ENCODE measurements at regions of chr6 and their contacts with region 1.

Region 1: GRCh38 chr6:166989427-166990032 is 9.7 kb upstream of the CEP43 start:
- DNase-seq: peak; percentile 47 to 74 (median 56)
- H3K4me3 ChIP-seq: no peak overlapping the region
- H3K4me3 Mint-ChIP-seq: peak overlapping the region in 1 of 8 donors; percentile 12
- H3K27ac ChIP-seq: no peak overlapping the region
- H3K27ac Mint-ChIP-seq: peak overlapping the region in 2 of 7 donors; percentile 67 to 78
- H3K4me1 ChIP-seq: peaks cover 11% of the 10 kb centered on the region
- H3K4me1 Mint-ChIP-seq: peaks cover 20 to 33% (median 24%) of the 10 kb centered on the region in 4 donors
- H3K27me3 ChIP-seq: no peaks in the 10 kb centered on the region
- H3K27me3 Mint-ChIP-seq: no peaks in the 10 kb centered on the region

Region 2: GRCh38 chr6:166775180-166776081 is 214.1 kb before region 1 on chr6:
- CTCF ChIA-PET with region 1: interaction called, 103 read pairs
- POLR2A ChIA-PET with region 1: interaction called, 10 read pairs
- intact Hi-C with region 1: no loop called
- DNase-seq: peak; percentile 68 to 76 (median 73)
- H3K4me3 ChIP-seq: no peak overlapping the region
- H3K4me3 Mint-ChIP-seq: no peak overlapping the region
- H3K27ac ChIP-seq: no peak overlapping the region
- H3K27ac Mint-ChIP-seq: no peak overlapping the region
- H3K4me1 ChIP-seq: peaks cover 5% of the 10 kb centered on the region
- H3K4me1 Mint-ChIP-seq: peaks cover 0 to 5% (median 3%) of the 10 kb centered on the region in 4 donors
- H3K27me3 ChIP-seq: no peaks in the 10 kb centered on the region
- H3K27me3 Mint-ChIP-seq: peaks cover 2 to 6% of the 10 kb centered on the region in 2 donors

Region 3: DNA sequence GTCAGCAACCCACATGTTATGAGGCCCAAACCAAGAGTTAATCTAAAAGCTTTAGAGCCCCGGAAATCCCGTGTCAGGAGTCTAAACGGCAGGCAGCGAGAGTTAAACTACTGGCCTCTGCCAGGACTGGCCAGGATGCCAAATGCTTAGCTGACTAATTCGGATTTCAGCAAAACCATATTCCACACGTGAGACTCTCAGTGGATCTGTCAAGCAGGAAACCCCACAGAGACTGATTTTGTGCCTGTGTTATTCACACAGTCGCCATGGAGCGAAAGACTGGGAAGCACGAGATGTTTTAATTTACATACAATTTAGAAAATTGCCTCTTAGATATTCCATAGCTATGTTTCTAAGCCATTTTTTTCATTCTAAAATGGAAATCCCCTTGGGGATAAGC is 186.1 kb before region 1 on chr6:
- CTCF ChIA-PET with region 1: interaction called, 10 read pairs
- POLR2A ChIA-PET with region 1: no interaction called
- intact Hi-C with region 1: no loop called
- DNase-seq: no peak
- H3K4me3 ChIP-seq: no peak overlapping the region
- H3K4me3 Mint-ChIP-seq: no peak overlapping the region
- H3K27ac ChIP-seq: no peak overlapping the region
- H3K27ac Mint-ChIP-seq: no peak overlapping the region
- H3K4me1 ChIP-seq: no peaks in the 10 kb centered on the region
- H3K4me1 Mint-ChIP-seq: peaks cover 0 to 5% (median 0%) of the 10 kb centered on the region in 4 donors
- H3K27me3 ChIP-seq: no peaks in the 10 kb centered on the region
- H3K27me3 Mint-ChIP-seq: no peaks in the 10 kb centered on the region

Region 4: DNA sequence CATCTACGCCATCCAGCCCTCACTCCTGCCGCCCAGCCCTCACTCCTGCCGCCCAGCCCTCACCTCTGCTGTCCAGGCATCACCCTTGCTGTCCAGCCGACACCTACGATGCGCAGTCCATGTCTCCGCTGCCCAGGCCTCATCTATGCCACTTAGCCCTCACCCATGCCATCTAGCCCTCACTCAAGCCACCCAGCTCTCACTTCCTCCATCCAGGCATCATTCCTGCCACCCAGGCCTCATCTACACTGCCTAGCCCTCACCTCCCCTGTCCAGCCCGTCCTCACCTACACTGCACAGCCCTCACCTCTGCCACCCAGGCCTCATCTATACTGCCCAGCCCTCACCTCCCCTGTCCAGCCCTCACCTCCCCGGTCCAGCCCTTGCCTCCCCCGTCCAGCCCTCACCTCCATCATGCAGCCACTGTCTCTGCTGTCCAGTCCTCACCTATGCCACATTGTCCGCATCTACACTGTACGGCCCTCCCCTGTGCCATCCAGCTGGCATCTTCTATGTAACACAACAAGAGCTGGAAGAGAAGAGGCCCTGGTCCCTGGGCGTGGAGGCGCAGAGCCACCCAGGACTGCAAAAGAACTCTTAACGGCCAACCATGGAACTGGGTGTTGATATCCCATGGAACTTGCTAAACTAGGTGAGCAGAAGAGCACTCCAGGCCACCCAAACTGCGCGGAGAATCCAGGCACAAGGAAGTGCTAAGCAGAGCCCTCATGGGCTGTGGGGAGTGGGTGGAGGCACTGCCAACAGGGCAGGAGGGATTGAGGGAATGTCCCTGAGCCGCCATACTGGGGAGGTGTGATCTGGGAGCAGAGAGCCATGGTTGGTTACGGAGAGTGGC is 64.2 kb before region 1 on chr6:
- CTCF ChIA-PET with region 1: interaction called, 18 read pairs
- POLR2A ChIA-PET with region 1: no interaction called
- intact Hi-C with region 1: no loop called
- DNase-seq: no peak
- H3K4me3 ChIP-seq: no peak overlapping the region
- H3K4me3 Mint-ChIP-seq: no peak overlapping the region
- H3K27ac ChIP-seq: no peak overlapping the region
- H3K27ac Mint-ChIP-seq: peak overlapping the region; percentile 27 to 87 (median 67)
- H3K4me1 ChIP-seq: peaks cover 3% of the 10 kb centered on the region
- H3K4me1 Mint-ChIP-seq: peaks cover 3 to 8% (median 7%) of the 10 kb centered on the region in 4 donors
- H3K27me3 ChIP-seq: no peaks in the 10 kb centered on the region
- H3K27me3 Mint-ChIP-seq: no peaks in the 10 kb centered on the region

Region 5: GRCh38 chr6:166950443-166950821 is 39.1 kb before region 1 on chr6:
- CTCF ChIA-PET with region 1: interaction called, 244 read pairs
- POLR2A ChIA-PET with region 1: interaction called, 66 read pairs
- intact Hi-C with region 1: loop called (anchors 1 kb)
- DNase-seq: peak in 4 of 5 donors; percentile 38 to 56 (median 41)
- H3K4me3 ChIP-seq: peak overlapping the region; percentile 26 to 39
- H3K4me3 Mint-ChIP-seq: peak overlapping the region; percentile 83 to 94 (median 88)
- H3K27ac ChIP-seq: peak overlapping the region; percentile 92
- H3K27ac Mint-ChIP-seq: peak overlapping the region; percentile 94 to 100 (median 99)
- H3K4me1 ChIP-seq: peaks cover 79% of the 10 kb centered on the region
- H3K4me1 Mint-ChIP-seq: peaks cover 53 to 75% (median 60%) of the 10 kb centered on the region in 4 donors
- H3K27me3 ChIP-seq: no peaks in the 10 kb centered on the region
- H3K27me3 Mint-ChIP-seq: no peaks in the 10 kb centered on the region

Region 6: DNA sequence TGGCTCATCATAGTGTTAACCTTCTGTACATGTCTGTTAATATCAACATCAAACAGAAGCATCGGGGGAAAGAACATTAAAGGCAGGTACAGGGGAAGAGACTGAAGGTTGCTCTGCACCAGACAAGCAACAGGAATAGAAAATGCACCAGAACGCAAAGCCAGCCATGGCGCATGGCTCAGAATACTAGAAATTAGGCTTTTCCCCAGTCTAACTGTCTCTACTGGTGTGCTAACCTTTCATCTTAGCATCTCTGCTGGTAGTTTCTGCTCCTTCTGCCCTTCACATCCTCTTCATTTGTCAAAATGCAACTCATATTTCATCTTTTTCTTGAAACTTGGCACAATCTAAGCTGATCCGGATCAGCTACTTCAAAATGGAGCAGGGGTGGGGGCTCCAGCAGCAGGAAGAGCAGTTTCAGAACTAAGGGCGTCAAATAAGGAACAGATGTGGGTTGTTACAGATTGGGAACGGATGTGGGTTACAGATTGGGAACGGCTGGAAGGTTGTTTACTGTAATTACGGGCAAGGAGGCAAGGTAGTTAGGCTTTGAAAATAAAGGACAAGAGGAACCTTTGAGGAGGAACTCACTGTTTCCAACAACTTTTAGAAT is 20.0 kb before region 1 on chr6:
- CTCF ChIA-PET with region 1: interaction called, 113 read pairs
- POLR2A ChIA-PET with region 1: interaction called, 4 read pairs
- intact Hi-C with region 1: no loop called
- DNase-seq: peak in 3 of 5 donors; percentile 19 to 47 (median 42)
- H3K4me3 ChIP-seq: no peak overlapping the region
- H3K4me3 Mint-ChIP-seq: peak overlapping the region; percentile 12 to 75 (median 69)
- H3K27ac ChIP-seq: peak overlapping the region; percentile 7
- H3K27ac Mint-ChIP-seq: peak overlapping the region; percentile 59 to 97 (median 87)
- H3K4me1 ChIP-seq: peaks cover 27% of the 10 kb centered on the region
- H3K4me1 Mint-ChIP-seq: peaks cover 13 to 40% (median 23%) of the 10 kb centered on the region in 4 donors
- H3K27me3 ChIP-seq: no peaks in the 10 kb centered on the region
- H3K27me3 Mint-ChIP-seq: no peaks in the 10 kb centered on the region

Region 7: GRCh38 chr6:167141667-167142432 is 152.3 kb after region 1 on chr6:
- CTCF ChIA-PET with region 1: interaction called, 121 read pairs
- POLR2A ChIA-PET with region 1: interaction called, 10 read pairs
- intact Hi-C with region 1: loop called (anchors 2 kb)
- DNase-seq: peak in 4 of 5 donors; percentile 54 to 62 (median 56)
- H3K4me3 ChIP-seq: no peak overlapping the region
- H3K4me3 Mint-ChIP-seq: peak overlapping the region in 2 of 8 donors; percentile 63 to 69
- H3K27ac ChIP-seq: no peak overlapping the region
- H3K27ac Mint-ChIP-seq: peak overlapping the region; percentile 72 to 91 (median 81)
- H3K4me1 ChIP-seq: peaks cover 17% of the 10 kb centered on the region
- H3K4me1 Mint-ChIP-seq: peaks cover 24 to 51% (median 29%) of the 10 kb centered on the region in 4 donors
- H3K27me3 ChIP-seq: no peaks in the 10 kb centered on the region
- H3K27me3 Mint-ChIP-seq: peaks cover 0 to 2% of the 10 kb centered on the region in 2 donors